Colonic mucosa (tissue), 4 donors: ENCODE measurements at regions of chr3 and their contacts with region 1.

Region 1: GRCh38 chr3:100073899-100074307 is 40.4 kb downstream of the FILIP1L start:
- DNase-seq: no peak
- H3K4me3 ChIP-seq: no peak overlapping the region
- H3K27ac ChIP-seq: peak overlapping the region; percentile 56
- H3K4me1 ChIP-seq: peaks cover 10% of the 10 kb centered on the region
- H3K27me3 ChIP-seq: no peaks in the 10 kb centered on the region
- CTCF ChIP-seq: no peak

Region 2: DNA sequence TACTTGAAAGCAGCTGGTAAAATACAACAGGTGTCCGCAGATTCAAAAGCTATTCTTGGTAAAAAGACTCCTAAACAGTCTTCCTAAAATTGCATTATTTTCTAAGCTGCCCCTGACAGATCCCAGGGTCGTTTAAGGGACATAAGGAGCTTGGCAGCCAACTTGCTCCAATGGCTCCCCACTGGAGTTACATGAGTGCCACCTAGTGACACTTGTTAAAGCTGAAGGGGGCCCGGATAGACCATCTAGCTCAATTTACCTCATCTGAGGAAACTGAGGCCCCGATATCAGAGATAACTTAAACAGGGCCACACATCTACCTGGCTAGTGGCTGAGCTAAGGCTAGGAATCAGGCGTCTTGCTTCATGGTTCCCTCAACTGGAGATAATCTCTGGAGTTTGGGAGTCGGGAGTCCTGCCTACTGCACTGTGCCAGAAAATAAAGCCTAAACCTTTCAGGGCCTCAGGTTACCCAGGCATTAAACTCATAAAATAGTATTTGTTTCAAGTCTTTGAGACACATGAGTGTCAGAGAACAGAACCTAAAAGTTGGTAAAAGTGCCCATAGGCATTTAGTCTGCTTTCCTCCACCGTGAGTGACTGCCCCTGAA is 180.4 kb after region 1 on chr3:
- intact Hi-C with region 1: loop called (anchors 5 kb)
- DNase-seq: peak; percentile 55
- H3K4me3 ChIP-seq: no peak overlapping the region
- H3K27ac ChIP-seq: no peak overlapping the region
- H3K4me1 ChIP-seq: no peaks in the 10 kb centered on the region
- H3K27me3 ChIP-seq: no peaks in the 10 kb centered on the region
- CTCF ChIP-seq: peak; percentile 76